ENCODE measurements at regions of chr4 and their contacts with region 1.

Region 1: GRCh38 chr4:121112530-121112929 is 40.2 kb upstream of the NDNF start:
- DNase-seq: no peak
- ATAC-seq: no peak
- H3K4me3 ChIP-seq: no peak overlapping the region
- H3K27ac ChIP-seq: no peak overlapping the region
- H3K4me1 ChIP-seq: no peaks in the 10 kb centered on the region
- H3K27me3 ChIP-seq: no peaks in the 10 kb centered on the region
- CTCF ChIP-seq: peak in 1 of 5 experiments; percentile 46
- POLR2A ChIP-seq: no peak

Region 2: DNA sequence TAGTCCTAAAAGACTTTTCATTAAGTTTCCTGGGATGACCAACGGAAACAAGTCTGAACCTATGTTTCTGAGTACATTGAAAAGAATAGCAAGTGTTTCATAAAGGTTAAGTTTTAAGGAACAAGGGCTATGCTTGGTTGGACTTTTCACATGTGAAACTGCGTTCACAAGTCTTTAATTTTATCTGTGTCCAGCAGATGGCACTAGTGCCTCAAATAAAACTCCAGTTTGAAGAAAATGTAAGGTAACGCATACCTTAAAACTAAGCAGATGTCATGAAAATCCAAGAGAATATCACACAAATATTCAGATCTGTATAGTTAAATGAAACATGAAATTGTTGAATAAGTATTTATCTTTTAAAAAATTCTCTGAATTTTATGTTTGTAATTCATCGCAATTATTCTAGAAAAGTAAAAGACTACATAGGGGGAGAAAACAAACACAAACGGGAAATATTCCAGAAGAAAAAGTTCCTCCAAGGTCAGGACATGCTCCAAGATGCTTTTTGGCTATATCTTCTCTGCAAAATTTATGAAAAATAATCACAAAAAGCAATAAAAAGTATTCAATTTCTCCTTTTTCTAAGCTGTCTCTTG is 956.3 kb before region 1 on chr4:
- in situ Hi-C with region 1: loop called in 3 of 4 experiments (anchors 10 to 25 kb)
- intact Hi-C with region 1: no loop called
- DNase-seq: no peak
- ATAC-seq: peak in 1 of 2 donors; percentile 60
- H3K4me3 ChIP-seq: no peak overlapping the region
- H3K27ac ChIP-seq: no peak overlapping the region
- H3K4me1 ChIP-seq: no peaks in the 10 kb centered on the region
- H3K27me3 ChIP-seq: no peaks in the 10 kb centered on the region
- CTCF ChIP-seq: peak; percentile 30 to 73 (median 61)
- POLR2A ChIP-seq: no peak

Region 3: GRCh38 chr4:120855307-120856001 is 257.1 kb before region 1 on chr4:
- in situ Hi-C with region 1: no loop called
- intact Hi-C with region 1: no loop called
- DNase-seq: no peak
- ATAC-seq: no peak
- H3K4me3 ChIP-seq: no peak overlapping the region
- H3K27ac ChIP-seq: no peak overlapping the region
- H3K4me1 ChIP-seq: no peaks in the 10 kb centered on the region
- H3K27me3 ChIP-seq: no peaks in the 10 kb centered on the region
- CTCF ChIP-seq: no peak
- POLR2A ChIP-seq: no peak